Caco-2 (cell line): ENCODE measurements at regions of chr11 and their contacts with region 1.

Region 1: DNA sequence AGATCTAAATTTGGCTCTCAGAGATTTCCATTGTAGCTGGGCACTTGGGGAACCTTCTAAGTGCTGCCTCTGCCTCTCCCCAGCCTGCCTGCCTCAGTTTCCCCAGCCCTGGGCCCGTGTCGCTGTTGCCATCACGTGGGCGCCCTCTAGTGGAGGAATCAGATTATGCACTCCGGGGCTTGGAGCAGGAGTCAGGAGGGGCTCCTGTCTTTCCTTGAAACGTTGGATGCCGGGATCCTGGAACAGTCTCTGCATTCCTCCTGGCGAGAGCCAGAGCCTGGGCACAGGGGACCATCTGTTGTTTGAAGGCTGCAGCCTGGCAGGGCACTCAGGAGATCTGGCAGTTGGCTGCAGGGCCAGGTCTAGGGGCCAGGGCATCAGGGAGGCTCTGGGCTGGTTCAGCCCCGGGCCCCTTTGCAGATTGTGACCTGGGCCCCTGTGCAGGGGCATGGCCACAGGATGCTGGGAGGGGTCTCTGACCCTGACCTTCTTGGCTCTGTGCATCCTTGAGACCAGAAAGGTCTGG is 71.6 kb downstream of the LRP5 start:
- DNase-seq: peak; percentile 80 to 88
- H3K4me3 ChIP-seq: no peak overlapping the region
- H3K4me3 Mint-ChIP-seq: no peak overlapping the region
- H3K27ac Mint-ChIP-seq: peak overlapping the region; percentile 53
- H3K4me1 ChIP-seq: peaks cover 37% of the 10 kb centered on the region
- H3K4me1 Mint-ChIP-seq: peaks cover 44% of the 10 kb centered on the region
- H3K27me3 ChIP-seq: no peaks in the 10 kb centered on the region
- H3K27me3 Mint-ChIP-seq: no peaks in the 10 kb centered on the region
- CTCF ChIP-seq: peak; percentile 99

Region 2: GRCh38 chr11:68213555-68214174 is 170.4 kb before region 1 on chr11:
- CTCF ChIA-PET with region 1: interaction called, 6 read pairs
- POLR2A ChIA-PET with region 1: no interaction called
- intact Hi-C with region 1: loop called (anchors 2 kb)
- DNase-seq: peak; percentile 95 to 97
- H3K4me3 ChIP-seq: peak overlapping the region; percentile 99
- H3K4me3 Mint-ChIP-seq: peak overlapping the region; percentile 86
- H3K27ac Mint-ChIP-seq: peak overlapping the region; percentile 85
- H3K4me1 ChIP-seq: peaks cover 21% of the 10 kb centered on the region
- H3K4me1 Mint-ChIP-seq: peaks cover 32% of the 10 kb centered on the region
- H3K27me3 ChIP-seq: no peaks in the 10 kb centered on the region
- H3K27me3 Mint-ChIP-seq: no peaks in the 10 kb centered on the region
- CTCF ChIP-seq: no peak

Region 3: DNA sequence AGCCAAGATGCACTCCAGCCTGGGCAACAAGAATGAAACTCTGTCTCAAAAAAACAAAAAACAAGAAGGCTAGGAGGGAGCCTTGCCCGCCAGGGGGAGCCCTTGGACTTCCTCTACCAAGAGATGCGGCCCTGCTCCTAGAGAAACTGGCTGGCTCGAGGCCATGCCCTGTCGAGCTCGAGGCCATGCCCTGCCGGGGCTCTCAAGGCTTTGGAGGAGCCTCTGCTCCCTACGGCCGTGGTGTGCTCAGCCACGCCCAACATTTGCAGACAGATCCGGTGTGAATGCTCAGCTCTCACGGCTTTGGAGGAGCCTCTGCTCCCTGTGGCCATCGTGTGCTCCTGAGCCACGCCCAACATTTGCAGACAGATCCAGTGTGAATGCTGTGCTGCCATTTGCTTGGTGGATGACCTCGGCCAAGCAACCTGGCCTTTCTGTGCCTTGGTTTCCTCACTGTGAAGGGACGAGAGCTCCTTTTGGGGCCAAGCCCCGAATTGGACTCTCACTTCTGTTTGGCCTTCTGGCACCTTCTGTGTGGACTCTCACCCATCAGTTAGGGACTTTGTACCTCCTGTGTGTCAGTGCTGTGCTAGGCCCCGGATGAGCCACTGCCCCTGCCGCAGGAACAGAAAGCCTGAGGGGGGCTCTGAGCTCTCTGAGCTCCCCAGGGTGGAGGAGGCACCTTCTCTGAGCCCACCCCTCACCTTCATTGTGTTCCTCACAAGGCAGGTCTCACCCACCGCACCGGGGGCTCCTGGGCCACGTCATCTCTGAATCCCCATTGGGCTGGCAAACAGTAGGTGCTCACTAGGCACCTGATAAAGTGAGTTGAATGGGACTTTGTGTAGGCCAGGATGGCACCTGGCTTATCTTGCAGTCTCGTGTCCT is 126.3 kb before region 1 on chr11:
- CTCF ChIA-PET with region 1: interaction called, 14 read pairs
- POLR2A ChIA-PET with region 1: no interaction called
- intact Hi-C with region 1: loop called (anchors 1 kb)
- DNase-seq: peak; percentile 97 to 98
- H3K4me3 ChIP-seq: no peak overlapping the region
- H3K4me3 Mint-ChIP-seq: no peak overlapping the region
- H3K27ac Mint-ChIP-seq: peak overlapping the region; percentile 40
- H3K4me1 ChIP-seq: peaks cover 23% of the 10 kb centered on the region
- H3K4me1 Mint-ChIP-seq: peaks cover 22% of the 10 kb centered on the region
- H3K27me3 ChIP-seq: no peaks in the 10 kb centered on the region
- H3K27me3 Mint-ChIP-seq: no peaks in the 10 kb centered on the region
- CTCF ChIP-seq: peak; percentile 95 to 96

Region 4: GRCh38 chr11:68271781-68272608 is 112.0 kb before region 1 on chr11 and contains the start of gene C11orf24:
- CTCF ChIA-PET with region 1: interaction called, 5 read pairs
- POLR2A ChIA-PET with region 1: interaction called, 7 read pairs
- intact Hi-C with region 1: loop called (anchors 5 kb)
- DNase-seq: peak; percentile 97 to 100
- H3K4me3 ChIP-seq: peak within 1 kb of the TSS; percentile 93
- H3K4me3 Mint-ChIP-seq: peak within 1 kb of the TSS; percentile 100
- H3K27ac Mint-ChIP-seq: peak within 1 kb of the TSS; percentile 98
- H3K4me1 ChIP-seq: peaks cover 33% of the 10 kb centered on the region
- H3K4me1 Mint-ChIP-seq: peaks cover 28% of the 10 kb centered on the region
- H3K27me3 ChIP-seq: no peaks in the 10 kb centered on the region
- H3K27me3 Mint-ChIP-seq: no peaks in the 10 kb centered on the region
- CTCF ChIP-seq: peak in 1 of 2 experiments; percentile 10
- total RNA-seq, gene C11orf24: 79.8 and 83.2 TPM in 2 replicates

Region 5: GRCh38 chr11:68312780-68313573 is 71.1 kb before region 1 on chr11:
- CTCF ChIA-PET with region 1: interaction called, 7 read pairs
- POLR2A ChIA-PET with region 1: interaction called, 3 read pairs
- intact Hi-C with region 1: loop called (anchors 1 kb)
- DNase-seq: peak; percentile 52 to 55
- H3K4me3 ChIP-seq: peak overlapping the region; percentile 89
- H3K4me3 Mint-ChIP-seq: peak overlapping the region; percentile 91
- H3K27ac Mint-ChIP-seq: peak overlapping the region; percentile 89
- H3K4me1 ChIP-seq: peaks cover 22% of the 10 kb centered on the region
- H3K4me1 Mint-ChIP-seq: peaks cover 44% of the 10 kb centered on the region
- H3K27me3 ChIP-seq: no peaks in the 10 kb centered on the region
- H3K27me3 Mint-ChIP-seq: no peaks in the 10 kb centered on the region
- CTCF ChIP-seq: no peak

Region 6: DNA sequence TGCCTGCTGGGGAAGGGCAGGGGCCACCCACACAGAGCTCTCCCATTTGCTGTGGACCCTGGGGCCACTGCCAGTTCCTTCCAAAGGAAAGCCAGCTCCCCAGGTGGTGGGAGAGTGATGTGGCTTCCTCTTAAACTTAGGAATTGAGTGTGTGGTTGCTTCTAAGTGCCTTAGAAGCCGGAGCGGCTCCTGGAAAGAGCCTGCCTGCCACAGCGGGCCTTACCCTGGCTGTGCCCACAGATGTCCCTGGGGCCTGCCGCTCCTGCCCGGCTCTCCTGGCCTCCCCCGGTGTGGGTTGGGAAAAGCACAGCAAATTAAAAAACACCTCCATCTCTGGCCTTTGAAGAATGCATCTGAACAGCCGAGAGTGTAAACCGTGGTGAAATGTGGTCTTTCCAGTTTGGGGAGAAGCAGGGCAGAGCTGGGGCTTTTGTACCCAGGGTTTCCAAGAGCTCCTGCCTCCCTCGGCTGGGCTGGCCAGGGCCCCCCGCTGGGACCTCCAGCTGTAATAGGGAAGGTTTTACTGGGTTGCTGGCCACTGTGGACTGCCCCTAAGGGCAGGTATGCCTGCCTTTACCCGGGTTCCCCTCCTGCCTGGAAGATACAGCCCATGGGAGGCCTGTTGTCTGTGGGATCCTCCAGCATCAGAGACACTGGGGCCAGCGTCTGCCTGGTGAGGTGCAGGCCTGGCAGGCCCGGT is 41.4 kb before region 1 on chr11:
- CTCF ChIA-PET with region 1: interaction called, 16 read pairs
- POLR2A ChIA-PET with region 1: interaction called, 4 read pairs
- intact Hi-C with region 1: loop called (anchors 1 kb)
- DNase-seq: peak; percentile 95
- H3K4me3 ChIP-seq: no peak overlapping the region
- H3K4me3 Mint-ChIP-seq: peak overlapping the region; percentile 43
- H3K27ac Mint-ChIP-seq: peak overlapping the region; percentile 90
- H3K4me1 ChIP-seq: peaks cover 66% of the 10 kb centered on the region
- H3K4me1 Mint-ChIP-seq: peaks cover 67% of the 10 kb centered on the region
- H3K27me3 ChIP-seq: no peaks in the 10 kb centered on the region
- H3K27me3 Mint-ChIP-seq: no peaks in the 10 kb centered on the region
- CTCF ChIP-seq: no peak